Naive thymus-derived CD4-positive, alpha-beta T cell (primary cell): ENCODE measurements at regions of chr17 and their contacts with region 1.

Region 1: DNA sequence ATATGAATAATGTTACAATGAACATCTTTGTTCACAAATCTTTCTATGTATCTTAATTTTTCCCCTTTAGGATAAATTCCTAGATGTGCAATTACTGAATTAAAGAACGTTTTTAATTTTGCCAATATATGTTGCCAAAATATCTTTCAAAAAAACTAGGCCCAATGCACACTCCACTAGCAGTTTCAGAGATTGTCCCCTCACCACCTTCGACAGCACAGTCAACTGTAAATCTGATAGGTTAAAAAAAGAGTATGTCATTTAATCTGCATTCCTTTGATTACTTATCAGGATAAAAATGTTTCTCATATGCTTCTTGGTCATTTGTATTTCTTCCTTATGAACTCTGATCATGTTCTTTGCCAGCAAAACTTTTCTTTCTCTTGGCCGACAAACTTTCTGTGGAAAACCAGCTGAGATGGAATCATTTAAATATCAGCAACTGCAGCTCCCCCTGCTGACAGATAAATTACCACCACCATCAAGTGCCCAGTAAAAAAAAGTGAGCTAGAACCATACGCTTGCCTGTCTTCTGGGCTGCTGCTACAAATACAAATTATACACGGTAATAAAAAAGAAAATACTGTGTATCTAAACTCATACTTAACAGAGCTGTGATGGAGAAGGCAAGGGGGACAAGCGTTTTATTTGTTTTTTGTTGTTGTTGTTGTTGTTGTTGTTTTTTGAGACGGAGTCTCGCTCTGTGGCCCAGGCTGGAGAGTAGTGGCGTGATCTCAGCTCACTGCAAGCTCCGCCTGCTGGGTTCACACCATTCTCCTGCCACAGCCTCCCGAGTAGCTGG is 19.6 kb upstream of the KANSL1 start:
- DNase-seq: peak in 7 of 9 donors; percentile 64 to 83 (median 77)
- ATAC-seq: peak; percentile 92
- H3K4me3 ChIP-seq: no peak overlapping the region
- H3K4me3 Mint-ChIP-seq: peak overlapping the region in 6 of 10 donors; percentile 7 to 35 (median 18)
- H3K27ac ChIP-seq: no peak overlapping the region
- H3K27ac Mint-ChIP-seq: peak overlapping the region in 8 of 9 donors; percentile 46 to 89 (median 80)
- H3K4me1 ChIP-seq: peaks cover 0 to 3% of the 10 kb centered on the region in 2 donors
- H3K4me1 Mint-ChIP-seq: peaks cover 24 to 69% (median 50%) of the 10 kb centered on the region in 7 donors
- H3K27me3 ChIP-seq: no peaks in the 10 kb centered on the region
- H3K27me3 Mint-ChIP-seq: no peaks in the 10 kb centered on the region

Region 2: GRCh38 chr17:46035112-46035818 is 177.6 kb before region 1 on chr17:
- CTCF ChIA-PET with region 1: interaction called, 19 read pairs
- POLR2A ChIA-PET with region 1: no interaction called
- intact Hi-C with region 1: no loop called
- DNase-seq: no peak
- ATAC-seq: peak; percentile 36
- H3K4me3 ChIP-seq: no peak overlapping the region
- H3K4me3 Mint-ChIP-seq: no peak overlapping the region
- H3K27ac ChIP-seq: peak overlapping the region; percentile 16
- H3K27ac Mint-ChIP-seq: peak overlapping the region; percentile 29 to 77 (median 53)
- H3K4me1 ChIP-seq: no peaks in the 10 kb centered on the region
- H3K4me1 Mint-ChIP-seq: peaks cover 0 to 11% (median 7%) of the 10 kb centered on the region in 7 donors
- H3K27me3 ChIP-seq: no peaks in the 10 kb centered on the region
- H3K27me3 Mint-ChIP-seq: no peaks in the 10 kb centered on the region

Region 3: GRCh38 chr17:46199379-46199778 is 13.5 kb before region 1 on chr17:
- CTCF ChIA-PET with region 1: interaction called, 40 read pairs
- POLR2A ChIA-PET with region 1: interaction called, 37 read pairs
- intact Hi-C with region 1: loop called (anchors 1 kb)
- DNase-seq: no peak
- ATAC-seq: no peak
- H3K4me3 ChIP-seq: no peak overlapping the region
- H3K4me3 Mint-ChIP-seq: peak overlapping the region in 1 of 10 donors; percentile 6
- H3K27ac ChIP-seq: peak overlapping the region; percentile 12
- H3K27ac Mint-ChIP-seq: peak overlapping the region in 8 of 9 donors; percentile 35 to 99 (median 63)
- H3K4me1 ChIP-seq: peaks cover 25 to 39% of the 10 kb centered on the region in 2 donors
- H3K4me1 Mint-ChIP-seq: peaks cover 38 to 94% (median 86%) of the 10 kb centered on the region in 7 donors
- H3K27me3 ChIP-seq: no peaks in the 10 kb centered on the region
- H3K27me3 Mint-ChIP-seq: no peaks in the 10 kb centered on the region